ENCODE measurements at regions of chr4 and their contacts with region 1.

Region 1: GRCh38 chr4:128303986-128304385 is 16.4 kb upstream of the PGRMC2 start:
- DNase-seq: no peak
- H3K4me3 ChIP-seq: no peak overlapping the region
- H3K27ac ChIP-seq: no peak overlapping the region
- H3K4me1 ChIP-seq: peaks cover 0 to 3% (median 0%) of the 10 kb centered on the region in 4 experiments; a peak in 1 of 7 replicates
- H3K27me3 ChIP-seq: no peaks in the 10 kb centered on the region
- CTCF ChIP-seq: no peak
- EP300 ChIP-seq: no peak
- POLR2A ChIP-seq: no peak
- RAD21 ChIP-seq: no peak

Region 2: DNA sequence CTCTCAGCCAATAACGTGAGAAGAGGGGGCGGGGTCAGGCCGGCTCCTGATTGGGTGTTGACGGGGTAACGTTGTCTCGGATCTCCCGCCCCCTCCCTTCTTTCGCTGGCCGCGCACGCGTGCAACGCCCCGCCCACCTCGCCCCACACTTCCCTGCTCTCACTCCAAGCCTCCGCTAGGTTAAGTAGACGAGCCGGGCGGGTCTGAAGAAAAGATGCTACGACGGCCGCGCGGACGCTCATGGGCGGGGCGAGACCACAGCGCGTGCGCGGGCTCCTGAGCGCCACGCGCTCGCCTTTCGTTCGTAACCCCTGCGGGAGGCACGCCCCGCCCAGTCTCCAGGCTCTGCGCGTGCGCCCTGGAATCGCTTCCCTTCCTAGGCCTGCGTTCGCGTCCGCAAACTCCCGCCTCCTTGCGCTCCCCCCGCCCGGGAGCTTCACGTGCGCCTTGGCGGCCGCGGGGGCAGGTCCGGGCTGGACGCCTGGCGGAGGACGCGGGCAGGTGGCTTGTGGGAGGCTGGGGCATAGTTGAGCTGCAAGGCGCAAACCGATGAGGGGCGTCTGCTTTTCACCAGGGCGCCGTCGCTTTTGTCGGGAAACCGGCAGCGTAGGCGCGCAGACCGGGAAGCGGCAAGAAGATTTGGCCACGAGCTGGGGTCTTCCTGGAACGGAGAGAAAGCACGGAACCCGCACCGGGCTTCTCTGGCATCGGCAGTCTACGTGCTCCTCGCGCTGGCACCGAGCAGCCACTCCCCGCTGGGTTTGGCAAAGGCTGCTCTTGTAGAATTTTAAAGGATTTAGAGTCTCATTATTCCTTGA is 15.9 kb before region 1 on chr4:
- CTCF ChIA-PET with region 1: interaction called, 6 read pairs
- POLR2A ChIA-PET with region 1: interaction called, 12 read pairs
- DNase-seq: peak; percentile 95 to 98
- H3K4me3 ChIP-seq: peak overlapping the region; percentile 64 to 95 (median 79)
- H3K27ac ChIP-seq: peak overlapping the region; percentile 94
- H3K4me1 ChIP-seq: peaks cover 0 to 8% (median 3%) of the 10 kb centered on the region in 4 experiments; a peak in 4 of 7 replicates
- H3K27me3 ChIP-seq: no peaks in the 10 kb centered on the region
- CTCF ChIP-seq: peak; percentile 12 to 23 (median 14)
- EP300 ChIP-seq: no peak
- POLR2A ChIP-seq: peak; percentile 27 to 63
- RAD21 ChIP-seq: no peak; a peak in 1 of 4 replicates